ENCODE measurements at regions of chr12 and their contacts with region 1.

Region 1: GRCh38 chr12:30695199-30696103 is at the start of gene IPO8:
- DNase-seq: peak; percentile 68 to 93 (median 81)
- ATAC-seq: peak; percentile 85 to 89
- H3K4me3 Mint-ChIP-seq: peak within 1 kb of the TSS; percentile 92 to 100 (median 98)
- H3K27ac Mint-ChIP-seq: peak within 1 kb of the TSS; percentile 94 to 99 (median 96)
- H3K4me1 Mint-ChIP-seq: peaks cover 32 to 54% (median 47%) of the 10 kb centered on the region in 4 donors
- H3K27me3 Mint-ChIP-seq: peaks cover 0 to 4% (median 0%) of the 10 kb centered on the region in 5 donors
- polyA plus RNA-seq, gene IPO8: 17.8 to 19.5 (median 17.8) TPM

Region 2: DNA sequence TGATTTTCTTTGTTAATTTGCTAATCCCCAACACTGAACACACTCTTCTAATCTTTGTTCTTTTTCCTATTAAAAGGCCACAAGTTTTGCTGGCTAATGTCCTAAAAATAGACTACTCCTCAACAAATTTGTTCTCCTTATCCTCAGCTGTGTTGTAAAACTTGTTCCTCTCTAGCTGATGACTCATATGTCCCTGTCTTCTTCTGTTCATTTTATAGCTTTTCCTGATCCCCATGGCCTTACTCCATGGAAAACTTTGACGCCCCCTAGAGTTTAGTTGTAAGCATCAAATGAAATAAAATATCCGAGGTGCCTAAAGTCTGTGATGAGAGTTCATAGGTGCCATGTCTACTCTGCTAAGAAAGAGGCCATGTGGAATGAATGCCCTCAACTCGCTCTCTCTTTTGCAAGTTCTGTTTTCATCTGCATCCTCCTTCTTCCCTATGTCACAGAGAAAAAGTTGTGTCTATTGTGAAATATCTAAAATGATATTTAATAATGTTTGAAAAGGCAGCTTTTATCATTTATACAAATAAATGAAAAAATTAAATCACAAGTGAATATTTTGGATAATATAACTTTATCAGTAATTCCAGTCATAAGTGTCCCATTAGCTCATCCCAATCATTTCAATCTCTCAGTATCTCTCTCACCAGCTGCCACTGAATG is 237.7 kb before region 1 on chr12:
- POLR2A ChIA-PET with region 1: no interaction called
- DNase-seq: no peak
- ATAC-seq: no peak
- H3K4me3 Mint-ChIP-seq: no peak overlapping the region
- H3K27ac Mint-ChIP-seq: no peak overlapping the region
- H3K4me1 Mint-ChIP-seq: no peaks in the 10 kb centered on the region
- H3K27me3 Mint-ChIP-seq: peaks cover 0 to 4% (median 0%) of the 10 kb centered on the region in 5 donors

Region 3: GRCh38 chr12:30679241-30679640 is 16.2 kb before region 1 on chr12:
- POLR2A ChIA-PET with region 1: no interaction called
- DNase-seq: no peak
- ATAC-seq: no peak
- H3K4me3 Mint-ChIP-seq: no peak overlapping the region
- H3K27ac Mint-ChIP-seq: no peak overlapping the region
- H3K4me1 Mint-ChIP-seq: peaks cover 0 to 3% (median 3%) of the 10 kb centered on the region in 4 donors
- H3K27me3 Mint-ChIP-seq: no peaks in the 10 kb centered on the region

Region 4: GRCh38 chr12:30754709-30755394 is 59.4 kb after region 1 on chr12 and contains the start of gene CAPRIN2:
- POLR2A ChIA-PET with region 1: interaction called, 26 read pairs
- DNase-seq: peak; percentile 87 to 95 (median 92)
- ATAC-seq: peak; percentile 89
- H3K4me3 Mint-ChIP-seq: peak within 1 kb of the TSS; percentile 90 to 95 (median 92)
- H3K27ac Mint-ChIP-seq: peak within 1 kb of the TSS; percentile 12 to 95 (median 92)
- H3K4me1 Mint-ChIP-seq: peaks cover 20 to 41% (median 34%) of the 10 kb centered on the region in 4 donors
- H3K27me3 Mint-ChIP-seq: no peaks in the 10 kb centered on the region
- polyA plus RNA-seq, gene CAPRIN2: 4.8 to 9.4 (median 6.7) TPM